H1 (cell line): ENCODE measurements at regions of chr11 and their contacts with region 1.

Region 1: GRCh38 chr11:102666331-102666957 is 39.1 kb downstream of the MMP27 start:
- DNase-seq: no peak
- H3K4me3 ChIP-seq: no peak overlapping the region
- H3K27ac ChIP-seq: no peak overlapping the region
- H3K4me1 ChIP-seq: peaks cover 0 to 3% (median 0%) of the 10 kb centered on the region in 4 experiments; a peak in 1 of 7 replicates
- H3K27me3 ChIP-seq: no peaks in the 10 kb centered on the region
- CTCF ChIP-seq: peak; percentile 8 to 84 (median 72)
- EP300 ChIP-seq: no peak
- POLR2A ChIP-seq: no peak
- RAD21 ChIP-seq: peak; percentile 91 to 94

Region 2: GRCh38 chr11:102341844-102342318 is 324.6 kb before region 1 on chr11:
- CTCF ChIA-PET with region 1: interaction called, 34 read pairs
- POLR2A ChIA-PET with region 1: no interaction called
- DNase-seq: peak in 1 of 2 experiments; percentile 75
- H3K4me3 ChIP-seq: no peak overlapping the region
- H3K27ac ChIP-seq: no peak overlapping the region
- H3K4me1 ChIP-seq: peaks cover 0 to 4% (median 1%) of the 10 kb centered on the region in 4 experiments; a peak in 2 of 7 replicates
- H3K27me3 ChIP-seq: no peaks in the 10 kb centered on the region
- CTCF ChIP-seq: peak; percentile 35 to 92 (median 81)
- EP300 ChIP-seq: no peak
- POLR2A ChIP-seq: no peak
- RAD21 ChIP-seq: peak; percentile 89 to 91

Region 3: DNA sequence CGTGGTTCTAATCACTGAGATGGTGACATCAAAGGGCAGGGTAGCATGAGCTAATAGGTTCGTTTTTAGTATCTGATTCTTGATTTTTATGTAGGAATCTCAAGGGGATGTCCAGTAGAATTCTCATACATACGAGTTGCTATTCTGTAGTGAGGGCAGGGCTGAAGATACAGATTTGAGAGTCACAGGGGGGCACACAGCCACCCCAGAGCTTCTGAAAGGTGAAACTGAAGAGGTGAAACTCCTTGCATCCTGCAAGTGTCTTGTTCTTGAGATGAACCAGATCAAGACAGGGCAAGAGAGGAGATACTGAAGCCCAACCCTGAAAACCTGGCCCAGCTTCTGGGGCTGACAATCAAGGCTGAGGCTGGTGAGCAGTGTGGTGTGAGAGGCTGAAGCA is 178.2 kb before region 1 on chr11:
- CTCF ChIA-PET with region 1: interaction called, 10 read pairs
- POLR2A ChIA-PET with region 1: no interaction called
- DNase-seq: no peak
- H3K4me3 ChIP-seq: no peak overlapping the region
- H3K27ac ChIP-seq: no peak overlapping the region
- H3K4me1 ChIP-seq: no peaks in the 10 kb centered on the region
- H3K27me3 ChIP-seq: no peaks in the 10 kb centered on the region
- CTCF ChIP-seq: no peak
- EP300 ChIP-seq: no peak
- POLR2A ChIP-seq: no peak
- RAD21 ChIP-seq: no peak

Region 4: DNA sequence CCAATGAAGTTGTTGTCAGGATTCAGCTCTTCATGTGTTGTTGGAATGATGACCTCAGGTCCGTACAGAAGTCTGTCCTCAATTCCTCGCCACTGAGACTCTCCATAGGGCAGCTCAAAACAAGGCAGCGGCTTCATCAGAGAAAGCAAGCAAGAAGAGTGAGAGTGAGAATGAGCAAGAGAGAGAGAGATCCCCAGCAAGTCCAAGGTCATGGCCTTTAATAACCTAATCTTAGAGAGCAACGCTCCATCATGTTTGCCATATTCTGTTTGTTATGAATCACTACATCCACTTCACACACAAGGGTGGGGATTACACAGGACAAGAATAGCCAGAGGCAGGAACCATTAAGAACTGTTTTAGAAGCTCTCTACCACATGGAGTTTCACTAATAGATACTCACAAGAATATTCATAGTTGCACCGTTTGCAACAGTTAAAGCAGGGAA is 112.6 kb before region 1 on chr11:
- CTCF ChIA-PET with region 1: interaction called, 16 read pairs
- POLR2A ChIA-PET with region 1: no interaction called
- DNase-seq: no peak
- H3K4me3 ChIP-seq: no peak overlapping the region
- H3K27ac ChIP-seq: no peak overlapping the region
- H3K4me1 ChIP-seq: peaks cover 0 to 2% (median 0%) of the 10 kb centered on the region in 4 experiments; a peak in 1 of 7 replicates
- H3K27me3 ChIP-seq: no peaks in the 10 kb centered on the region
- CTCF ChIP-seq: no peak
- EP300 ChIP-seq: no peak
- POLR2A ChIP-seq: no peak
- RAD21 ChIP-seq: no peak

Region 5: DNA sequence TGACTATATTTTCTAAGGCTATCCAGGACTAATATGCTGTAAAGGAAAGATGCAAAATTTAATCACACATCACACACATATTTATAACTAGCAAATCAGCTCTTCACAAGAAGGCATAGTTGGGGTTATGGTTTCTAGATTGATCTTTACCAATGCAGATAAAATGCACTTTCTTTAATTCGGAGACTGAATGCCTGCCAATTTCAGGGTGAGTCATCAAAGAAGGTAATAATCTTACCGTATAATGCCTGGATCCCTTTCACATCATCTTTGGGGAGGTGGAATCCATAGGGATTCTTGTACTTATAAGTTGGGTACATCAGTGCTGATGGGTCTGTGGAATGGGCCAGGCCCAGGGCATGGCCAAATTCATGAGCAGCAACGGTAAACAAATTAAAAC is 57.7 kb before region 1 on chr11:
- CTCF ChIA-PET with region 1: interaction called, 54 read pairs
- POLR2A ChIA-PET with region 1: no interaction called
- DNase-seq: no peak
- H3K4me3 ChIP-seq: no peak overlapping the region
- H3K27ac ChIP-seq: no peak overlapping the region
- H3K4me1 ChIP-seq: peaks cover 0 to 10% (median 1%) of the 10 kb centered on the region in 4 experiments; a peak in 3 of 7 replicates
- H3K27me3 ChIP-seq: no peaks in the 10 kb centered on the region
- CTCF ChIP-seq: no peak
- EP300 ChIP-seq: no peak
- POLR2A ChIP-seq: no peak
- RAD21 ChIP-seq: no peak

Region 6: DNA sequence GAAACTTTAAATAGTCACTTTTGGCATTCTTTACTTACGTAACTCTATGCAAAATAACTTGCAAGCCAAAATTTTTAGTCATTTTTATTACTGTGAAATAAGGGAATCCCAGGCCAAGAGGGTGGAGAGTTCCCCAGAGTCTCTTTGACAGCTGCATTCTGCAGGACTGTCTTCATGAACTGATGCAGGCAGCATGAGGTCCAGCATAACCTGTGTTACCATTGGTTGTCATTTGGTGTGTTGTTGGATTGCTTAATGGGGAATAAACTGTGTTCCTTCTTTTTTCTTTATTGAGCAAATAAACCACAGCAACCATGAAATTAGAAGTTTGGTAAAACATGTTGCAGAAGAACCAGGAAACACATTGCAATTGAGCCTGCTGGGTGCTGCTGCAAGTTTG is 14.5 kb after region 1 on chr11:
- CTCF ChIA-PET with region 1: interaction called, 58 read pairs
- POLR2A ChIA-PET with region 1: no interaction called
- DNase-seq: no peak
- H3K4me3 ChIP-seq: no peak overlapping the region
- H3K27ac ChIP-seq: no peak overlapping the region
- H3K4me1 ChIP-seq: peaks cover 0 to 3% (median 1%) of the 10 kb centered on the region in 4 experiments; a peak in 2 of 7 replicates
- H3K27me3 ChIP-seq: no peaks in the 10 kb centered on the region
- CTCF ChIP-seq: no peak
- EP300 ChIP-seq: no peak
- POLR2A ChIP-seq: no peak
- RAD21 ChIP-seq: no peak